ENCODE measurements at regions of chr6 and their contacts with region 1.

Region 1: DNA sequence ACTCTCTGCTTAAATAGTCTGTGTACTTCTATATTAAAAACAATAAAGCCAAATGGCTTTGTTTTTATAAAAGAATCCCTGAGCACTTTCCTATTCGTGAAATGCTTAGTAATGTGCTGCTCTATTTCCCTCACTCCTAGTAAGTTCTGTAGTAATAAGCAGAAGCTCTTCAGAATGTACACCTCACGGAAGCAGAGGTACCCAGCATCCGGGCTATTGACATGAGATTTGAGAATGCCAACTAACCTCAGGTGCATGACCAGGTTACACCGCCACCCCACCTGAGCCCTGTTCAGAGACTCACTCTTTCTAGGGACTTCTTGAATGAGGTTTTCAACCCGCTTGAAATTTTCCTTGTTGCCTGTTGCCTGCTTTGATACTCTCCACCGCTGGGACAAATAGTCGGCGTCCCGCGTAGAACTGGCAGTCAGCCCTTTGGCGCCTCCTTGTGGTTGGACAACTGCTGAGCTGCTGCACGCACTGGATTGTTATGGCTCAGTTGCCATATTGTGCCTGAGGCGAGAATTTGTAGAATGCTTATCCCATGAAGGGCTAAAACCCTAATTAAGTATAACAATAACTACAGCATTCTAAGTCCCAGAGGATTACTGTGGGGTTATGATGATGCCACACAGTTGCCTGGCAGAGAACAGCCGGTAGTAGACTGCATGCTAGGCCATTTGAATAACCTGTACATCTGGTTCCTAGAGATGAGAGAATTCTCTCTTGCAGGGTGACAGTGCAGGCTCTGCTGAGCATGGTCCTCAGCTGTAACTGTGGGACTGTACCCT is 95.4 kb downstream of the KHDC1L start:
- DNase-seq: peak; percentile 62 to 92 (median 83)
- ATAC-seq: peak; percentile 96 to 100 (median 99)
- H3K4me3 ChIP-seq: peak overlapping the region in 2 of 4 donors; percentile 5 to 28
- H3K27ac ChIP-seq: no peak overlapping the region
- H3K4me1 ChIP-seq: no peaks in the 10 kb centered on the region
- H3K27me3 ChIP-seq: no peaks in the 10 kb centered on the region
- CTCF ChIP-seq: peak; percentile 77 to 90 (median 86)

Region 2: GRCh38 chr6:72411872-72412708 is 717.8 kb before region 1 on chr6:
- intact Hi-C with region 1: loop called in 1 of 3 experiments (anchors 10 kb)
- DNase-seq: peak; percentile 34 to 86 (median 76)
- ATAC-seq: peak; percentile 69 to 99 (median 95)
- H3K4me3 ChIP-seq: no peak overlapping the region
- H3K27ac ChIP-seq: no peak overlapping the region
- H3K4me1 ChIP-seq: peaks cover 0 to 3% (median 0%) of the 10 kb centered on the region in 3 donors
- H3K27me3 ChIP-seq: no peaks in the 10 kb centered on the region
- CTCF ChIP-seq: peak; percentile 99 to 100 (median 100)

Region 3: GRCh38 chr6:72619883-72620696 is 509.8 kb before region 1 on chr6:
- intact Hi-C with region 1: loop called in 1 of 3 experiments (anchors 5 kb)
- DNase-seq: peak in 5 of 6 donors; percentile 25 to 59 (median 31)
- ATAC-seq: peak; percentile 30 to 70 (median 56)
- H3K4me3 ChIP-seq: peak overlapping the region in 2 of 4 donors; percentile 41 to 58
- H3K27ac ChIP-seq: no peak overlapping the region
- H3K4me1 ChIP-seq: peaks cover 0 to 8% (median 4%) of the 10 kb centered on the region in 3 donors
- H3K27me3 ChIP-seq: peaks cover 0 to under 1% (median 0%) of the 10 kb centered on the region in 4 donors
- CTCF ChIP-seq: no peak

Region 4: DNA sequence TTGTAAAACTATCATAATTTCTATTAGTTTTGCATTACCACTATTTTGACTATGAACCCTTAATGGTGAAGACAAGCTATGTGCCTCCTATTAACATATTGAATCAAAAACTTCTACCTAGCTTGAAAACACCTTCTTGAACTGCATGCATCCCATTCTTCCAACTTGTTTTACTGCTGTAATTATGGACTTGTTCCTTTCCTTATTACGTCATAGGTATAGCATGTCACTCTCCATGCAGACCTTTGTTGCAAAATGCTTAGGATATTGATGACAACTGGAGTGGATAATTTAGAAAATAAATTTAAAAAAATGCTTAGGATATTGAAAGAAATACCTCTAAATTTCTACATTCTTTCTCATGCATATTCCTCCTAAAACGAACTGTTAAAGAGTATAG is 288.7 kb before region 1 on chr6:
- intact Hi-C with region 1: no loop called
- DNase-seq: no peak
- ATAC-seq: no peak
- H3K4me3 ChIP-seq: no peak overlapping the region
- H3K27ac ChIP-seq: no peak overlapping the region
- H3K4me1 ChIP-seq: no peaks in the 10 kb centered on the region
- H3K27me3 ChIP-seq: no peaks in the 10 kb centered on the region
- CTCF ChIP-seq: no peak

Measured in pancreas (tissue), 10 donors.